A673 (cell line): ENCODE measurements at regions of chr5 and their contacts with region 1.

Region 1: DNA sequence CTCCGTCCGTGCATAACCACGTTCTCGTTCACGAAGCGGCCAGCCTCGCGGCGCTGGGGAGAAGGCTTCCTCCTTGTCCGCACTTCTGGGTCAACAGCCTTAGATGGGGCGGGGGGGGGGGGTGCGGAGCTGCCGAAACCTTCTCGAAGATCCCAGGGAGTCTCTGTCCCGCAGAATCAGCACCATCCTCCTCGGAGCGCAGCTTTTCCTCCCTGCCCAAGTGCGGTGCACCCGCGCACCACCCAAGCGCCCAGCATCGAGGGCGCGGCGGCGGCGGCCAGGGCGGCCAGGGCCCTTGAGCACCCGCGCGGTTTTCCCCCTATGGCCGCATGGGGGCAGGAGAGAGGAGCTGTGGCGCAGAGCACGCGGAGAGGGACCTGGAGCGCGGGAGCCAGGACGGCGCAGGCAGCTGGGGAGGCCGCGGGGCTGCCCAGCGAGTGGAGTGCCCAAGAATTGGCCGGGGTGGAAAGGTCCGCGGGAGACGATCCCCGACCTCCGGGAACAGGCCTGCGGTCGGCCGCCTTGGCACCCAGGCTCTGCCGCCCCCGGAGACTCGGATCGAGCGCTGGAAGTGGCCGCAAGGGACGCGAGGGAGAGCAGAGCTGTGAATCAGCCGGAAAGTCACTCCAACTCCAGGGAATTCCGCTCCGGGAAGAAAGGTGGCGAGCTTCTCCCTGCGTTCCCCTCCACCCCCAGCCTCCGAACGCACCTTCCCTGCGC is 43.1 kb downstream of the TMEM174 start:
- DNase-seq: peak; percentile 85
- H3K4me3 ChIP-seq: peak overlapping the region; percentile 29
- H3K27ac ChIP-seq: no peak overlapping the region
- H3K4me1 ChIP-seq: peaks cover 24% of the 10 kb centered on the region
- H3K27me3 ChIP-seq: peaks cover 11% of the 10 kb centered on the region
- CTCF ChIP-seq: peak; percentile 86

Region 2: DNA sequence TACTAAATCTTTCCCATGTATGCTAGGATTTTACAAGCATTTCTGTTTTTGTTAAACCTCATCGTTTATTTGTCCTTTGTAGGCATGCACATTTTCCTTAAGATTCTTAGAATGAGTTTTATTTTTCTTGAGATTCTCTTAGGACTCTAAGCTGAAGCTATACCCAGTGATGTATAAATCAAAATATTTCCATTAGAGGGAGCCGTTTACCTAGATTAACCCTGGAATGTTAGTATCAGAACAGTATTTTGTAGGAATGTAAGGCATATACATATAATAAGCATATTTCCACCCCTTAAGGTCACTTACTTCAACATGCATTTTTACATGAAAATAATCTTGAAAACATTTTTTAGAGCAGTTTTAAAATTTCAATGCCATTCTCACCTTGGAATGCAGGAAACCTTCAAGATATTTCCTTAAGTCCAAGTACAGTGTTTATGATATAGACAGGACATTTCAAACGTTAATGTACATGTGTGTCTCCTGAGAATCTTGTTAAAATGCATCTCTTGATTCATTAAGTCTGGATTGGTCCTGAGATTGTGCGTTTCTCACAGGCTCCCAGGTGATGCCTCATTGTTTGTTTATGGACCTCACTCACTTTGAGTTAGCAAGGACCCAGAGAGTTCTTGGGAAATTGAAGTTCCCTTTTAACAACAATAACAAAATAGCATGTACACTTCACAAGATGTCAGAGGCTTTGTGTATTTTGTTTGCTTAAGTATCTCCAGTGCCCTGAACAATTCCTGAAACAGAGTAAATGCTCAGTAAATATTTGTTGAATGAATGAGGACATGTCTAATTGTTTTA is 295.2 kb before region 1 on chr5:
- CTCF ChIA-PET with region 1: interaction called, 4 read pairs
- POLR2A ChIA-PET with region 1: no interaction called
- intact Hi-C with region 1: loop called (anchors 5 kb)
- DNase-seq: peak; percentile 35
- H3K4me3 ChIP-seq: no peak overlapping the region
- H3K27ac ChIP-seq: no peak overlapping the region
- H3K4me1 ChIP-seq: peaks cover 11% of the 10 kb centered on the region
- H3K27me3 ChIP-seq: no peaks in the 10 kb centered on the region
- CTCF ChIP-seq: peak; percentile 45

Region 3: GRCh38 chr5:72955768-72956323 is 260.2 kb before region 1 on chr5 and contains the start of gene FCHO2:
- CTCF ChIA-PET with region 1: interaction called, 3 read pairs
- POLR2A ChIA-PET with region 1: no interaction called
- intact Hi-C with region 1: loop called (anchors 10 kb)
- DNase-seq: peak; percentile 96
- H3K4me3 ChIP-seq: peak within 1 kb of the TSS; percentile 72
- H3K27ac ChIP-seq: peak within 1 kb of the TSS; percentile 54
- H3K4me1 ChIP-seq: peaks cover 5% of the 10 kb centered on the region
- H3K27me3 ChIP-seq: peaks cover 37% of the 10 kb centered on the region
- CTCF ChIP-seq: peak; percentile 85
- total RNA-seq, gene FCHO2: 2.5 and 5.8 TPM in 2 replicates

Region 4: DNA sequence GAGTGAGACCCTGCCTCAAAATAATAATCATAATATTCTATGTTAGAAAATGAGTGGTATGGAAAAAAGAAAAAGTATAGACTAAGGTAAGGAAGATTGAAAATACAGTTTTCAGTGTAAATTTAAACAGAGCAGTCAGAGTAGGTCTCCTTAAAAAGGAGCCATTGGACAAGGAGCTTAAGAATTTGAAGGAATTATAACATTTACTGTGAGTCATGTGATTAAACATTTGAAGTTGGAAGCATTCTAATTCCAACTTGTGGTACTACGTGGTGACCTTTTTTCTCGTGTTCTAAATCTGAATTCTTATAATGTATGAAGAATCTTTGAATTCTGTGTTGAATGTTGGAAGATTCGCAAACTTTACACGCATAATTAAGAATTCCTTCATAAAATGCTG is 135.0 kb before region 1 on chr5:
- CTCF ChIA-PET with region 1: interaction called, 3 read pairs
- POLR2A ChIA-PET with region 1: no interaction called
- intact Hi-C with region 1: loop called (anchors 5 kb)
- DNase-seq: no peak
- H3K4me3 ChIP-seq: no peak overlapping the region
- H3K27ac ChIP-seq: no peak overlapping the region
- H3K4me1 ChIP-seq: no peaks in the 10 kb centered on the region
- H3K27me3 ChIP-seq: no peaks in the 10 kb centered on the region
- CTCF ChIP-seq: no peak

Region 5: GRCh38 chr5:73201547-73202513 is 14.2 kb before region 1 on chr5:
- CTCF ChIA-PET with region 1: interaction called, 12 read pairs
- POLR2A ChIA-PET with region 1: no interaction called
- intact Hi-C with region 1: no loop called
- DNase-seq: peak; percentile 87
- H3K4me3 ChIP-seq: no peak overlapping the region
- H3K27ac ChIP-seq: no peak overlapping the region
- H3K4me1 ChIP-seq: no peaks in the 10 kb centered on the region
- H3K27me3 ChIP-seq: no peaks in the 10 kb centered on the region
- CTCF ChIP-seq: peak; percentile 92

Region 6: DNA sequence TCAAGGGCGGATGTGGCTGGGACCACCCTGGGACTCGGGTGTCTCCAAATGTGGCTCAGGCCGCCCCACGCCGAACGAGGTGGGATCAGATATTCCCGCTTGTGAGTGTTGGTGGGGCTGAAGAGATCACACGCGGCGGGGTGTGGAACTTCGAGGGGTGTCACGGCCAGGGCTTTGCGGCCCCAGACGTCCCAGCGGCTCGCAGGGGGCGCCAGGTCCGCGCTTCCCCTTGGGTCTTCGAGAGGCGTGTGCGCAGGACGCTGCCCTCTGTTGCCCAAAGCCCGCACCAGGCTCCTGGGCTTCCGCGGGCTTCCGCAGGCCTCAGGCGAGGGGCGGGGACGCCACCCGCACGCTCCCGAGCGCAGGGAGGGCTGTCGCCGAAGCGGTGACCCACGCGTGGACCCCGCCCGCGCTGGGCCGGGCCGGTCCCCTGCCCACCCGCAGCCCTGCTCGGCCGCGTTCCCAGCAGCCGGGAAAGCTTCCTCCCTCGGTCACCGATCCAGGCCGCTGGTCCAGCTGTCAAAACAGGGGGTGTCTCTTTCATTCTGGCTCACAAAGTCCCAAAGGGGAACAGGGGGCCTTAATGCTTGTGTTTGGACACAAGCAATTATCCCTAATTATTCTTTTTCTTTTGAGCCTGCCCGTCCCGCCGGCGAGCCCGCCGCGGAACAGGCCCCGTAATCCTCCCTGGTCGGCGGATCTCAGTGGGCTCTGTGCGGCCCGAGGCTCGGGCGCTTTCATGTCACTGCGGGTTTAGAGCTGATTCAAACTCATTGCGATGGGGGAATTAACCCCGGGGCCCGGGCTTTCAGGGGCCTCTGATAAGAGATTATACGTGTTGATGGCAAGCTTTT is 17.5 kb after region 1 on chr5:
- CTCF ChIA-PET with region 1: no interaction called
- POLR2A ChIA-PET with region 1: no interaction called
- intact Hi-C with region 1: no loop called
- DNase-seq: no peak
- H3K4me3 ChIP-seq: peak overlapping the region; percentile 15
- H3K27ac ChIP-seq: no peak overlapping the region
- H3K4me1 ChIP-seq: no peaks in the 10 kb centered on the region
- H3K27me3 ChIP-seq: peaks cover 4% of the 10 kb centered on the region
- CTCF ChIP-seq: no peak

Region 7: GRCh38 chr5:73437101-73437776 is 221.2 kb after region 1 on chr5:
- CTCF ChIA-PET with region 1: no interaction called
- POLR2A ChIA-PET with region 1: no interaction called
- intact Hi-C with region 1: loop called (anchors 5 kb)
- DNase-seq: peak; percentile 37
- H3K4me3 ChIP-seq: peak overlapping the region; percentile 36
- H3K27ac ChIP-seq: no peak overlapping the region
- H3K4me1 ChIP-seq: peaks cover 9% of the 10 kb centered on the region
- H3K27me3 ChIP-seq: no peaks in the 10 kb centered on the region
- CTCF ChIP-seq: peak; percentile 55

Region 8: DNA sequence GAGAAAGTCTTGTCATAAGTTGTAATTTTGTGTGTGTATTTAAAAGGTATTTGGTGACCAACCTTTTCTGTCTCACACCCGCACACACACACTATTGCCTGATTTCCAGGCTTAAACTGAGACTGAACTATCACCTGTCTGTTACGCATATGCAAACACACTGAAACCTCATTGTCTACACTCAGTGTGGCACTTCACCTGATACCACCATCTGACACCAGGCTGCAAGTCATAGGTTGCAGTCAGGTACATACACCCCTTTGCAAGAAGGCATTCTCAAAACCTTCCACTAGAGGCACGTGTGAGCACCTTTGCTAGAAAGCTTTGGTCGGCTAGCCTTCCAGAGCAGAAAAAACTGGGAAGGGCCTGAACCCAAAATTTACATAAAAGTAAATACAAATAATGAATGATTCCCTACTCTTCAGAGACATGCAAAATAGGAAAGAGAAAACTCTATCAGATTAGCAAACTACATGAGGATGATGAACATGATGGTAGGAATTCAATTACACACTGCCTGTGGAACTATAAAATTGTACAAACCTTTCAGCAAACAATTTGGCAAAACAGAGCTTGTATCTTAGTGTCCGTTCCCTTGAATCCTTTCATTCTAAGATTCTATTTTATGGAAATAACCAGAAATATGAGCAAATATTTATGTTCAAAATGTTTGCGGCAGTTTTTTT is 238.4 kb after region 1 on chr5:
- CTCF ChIA-PET with region 1: interaction called, 11 read pairs
- POLR2A ChIA-PET with region 1: no interaction called
- intact Hi-C with region 1: loop called (anchors 5 kb)
- DNase-seq: peak; percentile 62
- H3K4me3 ChIP-seq: no peak overlapping the region
- H3K27ac ChIP-seq: no peak overlapping the region
- H3K4me1 ChIP-seq: peaks cover 2% of the 10 kb centered on the region
- H3K27me3 ChIP-seq: peaks cover 44% of the 10 kb centered on the region
- CTCF ChIP-seq: peak; percentile 74

Region 9: GRCh38 chr5:75023368-75024159 is 1807.5 kb after region 1 on chr5:
- CTCF ChIA-PET with region 1: no interaction called
- POLR2A ChIA-PET with region 1: no interaction called
- intact Hi-C with region 1: no loop called
- DNase-seq: no peak
- H3K4me3 ChIP-seq: no peak overlapping the region
- H3K27ac ChIP-seq: no peak overlapping the region
- H3K4me1 ChIP-seq: peaks cover 4% of the 10 kb centered on the region
- H3K27me3 ChIP-seq: no peaks in the 10 kb centered on the region
- CTCF ChIP-seq: no peak